BJ (cell line): ENCODE measurements at regions of chr16 and their contacts with region 1.

Region 1: DNA sequence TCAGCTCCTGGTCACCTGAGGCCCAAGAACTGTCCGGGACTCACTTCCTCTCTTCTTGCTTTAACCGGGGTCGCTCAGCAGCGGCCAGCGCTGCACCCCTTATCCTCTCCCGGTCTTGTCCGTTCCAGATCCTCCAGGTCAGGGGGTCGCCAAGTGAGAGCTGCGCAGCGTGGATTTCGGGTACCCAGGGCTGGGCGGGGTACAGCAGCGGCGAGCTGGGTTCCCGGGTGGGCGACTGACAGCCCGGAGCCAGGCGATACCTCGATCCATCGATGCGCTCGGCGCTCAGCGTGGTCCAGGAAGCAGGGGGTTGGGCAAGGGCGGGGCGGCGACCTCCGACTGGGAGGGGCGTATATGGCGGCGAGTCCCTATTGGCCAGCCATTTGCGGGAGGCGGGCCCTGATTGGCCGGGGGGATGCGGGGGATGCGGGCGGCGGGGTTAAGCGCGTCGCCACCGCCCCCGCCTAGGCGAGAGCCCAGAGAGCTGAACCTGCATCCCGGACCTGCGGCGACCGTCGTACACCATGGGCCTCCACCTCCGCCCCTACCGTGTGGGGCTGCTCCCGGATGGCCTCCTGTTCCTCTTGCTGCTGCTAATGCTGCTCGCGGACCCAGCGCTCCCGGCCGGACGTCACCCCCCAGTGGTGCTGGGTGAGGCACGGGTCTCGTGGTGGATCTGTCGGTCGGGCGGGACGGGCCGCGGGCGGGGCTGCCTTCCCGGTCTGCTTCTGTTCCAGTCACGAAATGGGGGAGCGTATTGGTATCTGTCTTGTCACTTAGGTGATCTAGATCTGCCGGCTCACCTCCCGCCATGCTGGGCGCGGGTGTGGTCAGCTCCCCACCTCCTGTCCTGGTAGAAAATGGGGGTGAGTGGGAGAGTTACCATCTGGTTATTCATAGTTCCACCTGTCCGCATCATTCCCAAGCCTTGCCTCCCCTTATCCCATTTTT is at the start of gene PLA2G15:
- DNase-seq: no peak
- H3K4me3 ChIP-seq: peak within 1 kb of the TSS; percentile 92
- H3K27me3 ChIP-seq: no peaks in the 10 kb centered on the region
- CTCF ChIP-seq: 0 out of 2 replicates have a peak, but pooled peaks have one; percentile 8
- polyA plus RNA-seq, gene PLA2G15: 23.9 and 39.2 TPM in 2 replicates

Region 2: GRCh38 chr16:68229431-68230198 is 15.6 kb before region 1 on chr16:
- CTCF ChIA-PET with region 1: no interaction called
- POLR2A ChIA-PET with region 1: no interaction called
- DNase-seq: no peak
- H3K4me3 ChIP-seq: no peak overlapping the region
- H3K27me3 ChIP-seq: no peaks in the 10 kb centered on the region
- CTCF ChIP-seq: peak; percentile 93

Region 3: DNA sequence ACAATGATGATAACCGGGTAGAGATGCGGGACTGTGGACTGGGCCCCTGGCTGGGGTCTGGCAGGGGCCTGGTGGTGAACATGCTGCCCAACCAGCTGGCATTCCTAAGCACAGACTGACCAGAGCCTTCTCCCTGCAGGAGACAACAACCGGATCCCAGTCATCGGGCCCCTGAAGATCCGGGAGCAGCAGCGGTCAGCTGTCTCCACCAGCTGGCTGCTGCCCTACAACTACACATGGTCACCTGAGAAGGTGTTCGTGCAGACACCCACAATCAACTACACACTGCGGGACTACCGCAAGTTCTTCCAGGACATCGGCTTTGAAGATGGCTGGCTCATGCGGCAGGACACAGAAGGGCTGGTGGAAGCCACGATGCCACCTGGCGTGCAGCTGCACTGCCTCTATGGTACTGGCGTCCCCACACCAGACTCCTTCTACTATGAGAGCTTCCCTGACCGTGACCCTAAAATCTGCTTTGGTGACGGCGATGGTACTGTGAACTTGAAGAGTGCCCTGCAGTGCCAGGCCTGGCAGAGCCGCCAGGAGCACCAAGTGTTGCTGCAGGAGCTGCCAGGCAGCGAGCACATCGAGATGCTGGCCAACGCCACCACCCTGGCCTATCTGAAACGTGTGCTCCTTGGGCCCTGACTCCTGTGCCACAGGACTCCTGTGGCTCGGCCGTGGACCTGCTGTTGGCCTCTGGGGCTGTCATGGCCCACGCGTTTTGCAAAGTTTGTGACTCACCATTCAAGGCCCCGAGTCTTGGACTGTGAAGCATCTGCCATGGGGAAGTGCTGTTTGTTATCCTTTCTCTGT is 14.0 kb after region 1 on chr16:
- CTCF ChIA-PET with region 1: interaction called, 27 read pairs
- POLR2A ChIA-PET with region 1: interaction called, 7 read pairs
- DNase-seq: no peak
- H3K4me3 ChIP-seq: no peak overlapping the region
- H3K27me3 ChIP-seq: no peaks in the 10 kb centered on the region
- CTCF ChIP-seq: no peak

Region 4: GRCh38 chr16:68707341-68708152 is 462.4 kb after region 1 on chr16:
- CTCF ChIA-PET with region 1: no interaction called
- POLR2A ChIA-PET with region 1: no interaction called
- DNase-seq: no peak
- H3K4me3 ChIP-seq: no peak overlapping the region
- H3K27me3 ChIP-seq: peaks cover 4% of the 10 kb centered on the region; the same call in 1 of the 2 replicates
- CTCF ChIP-seq: 0 out of 2 replicates have a peak, but pooled peaks have one; percentile 9